ENCODE measurements at regions of chr20 and their contacts with region 1.

Region 1: DNA sequence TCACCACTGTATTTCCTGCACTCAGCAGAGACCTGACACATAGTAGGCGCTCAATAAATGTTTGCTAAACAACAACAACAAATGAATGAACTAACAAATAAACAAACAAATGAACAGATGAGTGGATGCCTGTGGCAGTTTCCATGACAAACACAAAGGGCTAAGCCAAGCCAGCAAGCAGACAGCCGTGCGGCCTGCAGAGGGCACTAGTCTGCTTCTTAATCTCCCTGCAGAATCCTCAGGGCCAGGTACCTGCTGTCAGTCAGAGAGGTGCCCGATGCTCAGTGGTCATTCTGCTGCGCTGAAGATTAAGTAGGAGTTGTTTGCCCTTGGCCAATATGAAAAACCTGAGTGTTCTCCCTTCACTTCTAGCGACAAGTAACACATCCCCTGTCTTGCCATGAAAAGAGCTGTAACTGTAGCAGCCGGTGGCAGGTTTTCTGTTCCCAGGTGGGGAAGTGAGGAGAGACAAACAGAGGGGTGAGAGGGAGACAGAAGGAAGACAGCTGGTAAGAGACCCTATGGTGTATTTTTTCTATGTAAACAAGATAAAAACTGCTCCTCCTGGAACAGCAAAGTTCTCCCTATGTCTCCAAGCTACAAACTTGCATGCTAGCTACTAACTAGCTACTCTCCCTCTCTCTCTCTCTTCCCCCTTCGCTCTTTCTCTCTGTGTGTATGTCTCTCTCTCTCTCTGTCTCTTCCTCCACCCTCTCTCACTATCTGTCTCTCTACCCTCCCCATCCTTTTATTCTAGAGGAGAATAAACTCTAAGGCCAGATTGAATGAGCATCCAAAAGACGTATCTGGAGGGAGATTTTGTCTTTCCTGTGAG is at the start of gene MC3R:
- DNase-seq: peak; percentile 22
- H3K4me3 Mint-ChIP-seq: no peak within 1 kb of the TSS
- H3K27ac Mint-ChIP-seq: no peak within 1 kb of the TSS
- H3K4me1 Mint-ChIP-seq: no peaks in the 10 kb centered on the region
- H3K27me3 Mint-ChIP-seq: peaks cover 2% of the 10 kb centered on the region
- total RNA-seq, gene MC3R: not detected in 2 replicates

Region 2: GRCh38 chr20:56343861-56344381 is 95.8 kb after region 1 on chr20:
- intact Hi-C with region 1: loop called (anchors 1 kb)
- DNase-seq: peak; percentile 13
- H3K4me3 Mint-ChIP-seq: no peak overlapping the region
- H3K27ac Mint-ChIP-seq: no peak overlapping the region
- H3K4me1 Mint-ChIP-seq: no peaks in the 10 kb centered on the region
- H3K27me3 Mint-ChIP-seq: peaks cover 59% of the 10 kb centered on the region

Measured in activated T-helper 2 cell treated with anti-CD3 and anti-CD28 coated beads, Interferon-gamma antibody, Interleukin-2, Interleukin-4, amounts not matched to agents 10 μg/mL and 5 μg/mL and 100 μg/mL, durations not matched to agents 14 hours and 24 hours and 36 hours (primary cell).